Left colon (tissue), 2 donors: ENCODE measurements at regions of chr2 and their contacts with region 1.

Region 1: DNA sequence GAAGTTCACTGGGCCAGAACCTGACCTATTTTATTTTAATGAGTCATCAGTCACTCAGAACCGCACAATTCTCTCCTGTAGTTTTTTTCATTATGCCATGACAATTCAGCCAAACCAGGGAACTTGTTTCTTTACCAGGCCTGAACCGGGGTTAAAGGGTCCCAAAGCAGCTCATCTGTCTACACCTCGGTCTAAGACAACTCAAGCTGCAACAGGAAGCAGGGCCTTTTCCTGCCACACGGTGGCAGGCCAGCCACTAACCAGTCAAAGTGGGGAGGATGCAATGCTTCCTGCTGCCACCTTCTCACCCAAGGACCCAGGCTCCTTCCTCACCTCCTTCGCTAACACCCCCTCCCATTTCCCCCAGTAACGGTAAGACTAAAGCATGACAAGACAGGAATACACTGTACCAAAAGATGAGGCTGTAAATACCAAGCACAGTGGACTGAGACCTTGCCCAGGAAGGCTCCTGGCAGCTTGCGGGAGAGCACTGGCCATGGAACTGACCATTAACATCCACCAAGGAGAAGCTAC is 56.7 kb upstream of the ACKR3 start:
- DNase-seq: peak; percentile 38 to 66
- ATAC-seq: peak; percentile 64

Region 2: DNA sequence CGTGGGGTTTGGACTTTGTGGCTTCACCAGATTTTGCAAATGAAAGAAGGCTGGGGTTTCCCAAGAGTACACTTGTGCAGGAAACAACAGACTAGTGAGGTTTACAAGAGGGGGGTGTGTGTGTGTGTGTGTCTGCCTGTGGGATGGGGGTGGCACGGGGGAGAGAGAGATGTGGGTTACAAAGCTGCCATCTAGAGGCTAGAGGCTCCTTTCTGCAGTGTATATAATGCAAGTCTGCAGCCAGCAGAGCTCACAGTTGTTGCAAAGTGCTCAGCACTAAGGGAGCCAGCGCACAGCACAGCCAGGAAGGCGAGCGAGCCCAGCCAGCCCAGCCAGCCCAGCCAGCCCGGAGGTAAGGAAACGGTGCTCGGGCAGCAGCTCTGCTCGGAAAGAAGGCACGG is 56.6 kb after region 1 on chr2 and contains the start of gene ACKR3:
- intact Hi-C with region 1: loop called in 1 of 2 experiments (anchors 5 kb)
- DNase-seq: peak; percentile 56 to 72
- ATAC-seq: peak; percentile 74
- total RNA-seq, gene ACKR3: 8.5 to 11.3 TPM

Region 3: DNA sequence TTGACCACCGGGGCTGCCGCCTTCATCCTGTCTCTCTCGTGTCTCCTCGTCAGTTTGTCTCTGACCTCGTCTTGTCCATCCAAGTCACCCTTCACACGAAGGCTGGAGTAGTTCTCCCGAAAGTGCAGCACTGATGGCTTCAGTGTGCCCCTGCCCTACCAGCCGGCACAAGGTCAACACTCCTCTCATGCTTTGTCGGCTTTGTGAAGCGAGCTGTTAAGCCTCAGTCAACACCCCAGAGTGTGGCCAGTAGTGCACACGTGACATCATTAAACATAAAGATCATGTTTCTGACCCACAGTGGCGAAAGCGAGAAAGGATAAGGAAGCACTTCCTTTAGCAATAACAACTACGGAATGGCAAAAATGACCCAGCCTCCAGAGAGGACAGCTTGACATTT is 79.9 kb after region 1 on chr2:
- intact Hi-C with region 1: no loop called
- DNase-seq: no peak
- ATAC-seq: no peak

Region 4: GRCh38 chr2:236665561-236666118 is 152.7 kb after region 1 on chr2:
- intact Hi-C with region 1: no loop called
- DNase-seq: no peak
- ATAC-seq: no peak

Region 5: DNA sequence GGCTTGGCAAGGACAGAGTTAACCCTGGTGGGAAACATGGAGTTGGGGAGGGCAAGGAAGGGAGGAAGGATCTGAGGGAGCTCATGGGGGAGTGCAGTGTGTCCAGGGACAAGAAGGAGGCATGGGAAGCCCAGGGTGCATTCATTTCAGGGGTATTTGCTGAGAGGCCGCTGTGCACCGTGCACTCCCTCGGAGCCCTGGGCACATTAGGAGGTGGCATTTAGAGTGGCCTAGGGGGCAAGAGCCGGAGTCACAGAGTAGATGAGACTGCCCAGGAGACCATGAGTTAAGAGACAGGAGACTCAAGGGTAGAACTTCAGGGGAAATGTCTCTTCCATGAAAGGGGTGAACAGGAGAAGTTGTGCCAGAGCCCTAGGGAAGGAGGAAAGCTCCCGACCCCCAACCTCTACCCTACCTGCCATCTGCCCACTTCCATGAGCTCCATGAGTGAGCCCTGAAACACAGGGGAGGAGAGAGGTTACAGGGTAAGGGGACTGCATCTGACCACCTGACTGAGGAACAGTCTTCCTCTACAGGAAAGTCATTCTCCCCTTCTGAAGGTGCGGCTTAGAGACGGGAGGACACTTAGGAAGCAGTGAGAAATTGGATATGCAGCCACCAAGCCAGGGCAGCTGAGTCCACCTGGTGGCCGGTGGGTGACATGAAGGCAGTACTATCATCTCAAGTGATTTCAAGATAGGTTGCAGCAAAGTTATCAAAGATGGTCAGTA is 514.2 kb after region 1 on chr2:
- intact Hi-C with region 1: loop called in 1 of 2 experiments (anchors 10 kb)
- DNase-seq: peak; percentile 47 to 74
- ATAC-seq: peak; percentile 67